Common myeloid progenitor, CD34-positive (primary cell): ENCODE measurements at regions of chr3 and their contacts with region 1.

Region 1: DNA sequence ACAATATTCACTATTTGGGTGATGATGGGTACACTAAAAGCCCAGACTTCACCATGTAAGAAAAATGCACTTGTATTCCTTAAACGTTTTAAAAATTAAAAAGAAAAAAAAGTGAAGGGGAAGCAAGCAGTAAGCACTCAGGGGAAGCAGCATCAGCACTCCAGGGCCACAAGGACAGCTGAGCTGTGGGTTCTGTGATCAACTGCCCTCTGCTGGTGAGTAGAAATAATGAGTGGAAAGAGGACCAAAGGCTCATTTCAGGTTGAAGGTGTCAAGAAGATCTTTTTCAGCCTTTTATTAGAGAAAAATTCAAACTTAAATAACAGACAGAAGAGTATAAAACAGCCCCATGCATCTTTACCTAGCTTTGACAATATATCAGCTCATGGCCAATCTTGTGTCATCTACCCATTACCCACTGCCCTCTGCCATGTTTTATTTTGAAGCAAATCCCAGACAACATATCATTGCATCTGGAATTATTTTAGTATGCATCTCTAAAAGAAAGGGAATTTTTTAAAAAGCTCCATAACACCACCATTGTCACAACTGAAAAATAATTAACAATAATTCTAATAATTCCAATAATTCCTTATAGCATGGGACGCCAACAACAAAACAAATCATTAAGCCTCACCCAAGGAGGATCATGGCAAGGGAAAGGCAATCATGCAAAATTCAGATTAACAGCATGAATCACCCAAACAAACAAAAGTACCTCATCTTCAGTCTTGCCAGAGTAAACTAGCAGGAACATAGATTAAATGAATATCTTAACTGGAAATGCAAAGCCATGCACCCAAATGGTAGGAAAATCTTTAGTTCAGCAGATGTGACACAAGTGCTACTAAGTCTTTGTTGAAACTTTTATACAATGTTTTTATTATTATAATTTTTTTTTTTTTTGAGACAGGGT is 42.5 kb downstream of the TAMM41 start:
- DNase-seq: peak; percentile 59 to 85 (median 84)
- H3K4me3 ChIP-seq: no peak overlapping the region
- H3K27ac ChIP-seq: no peak overlapping the region
- H3K4me1 ChIP-seq: no peaks in the 10 kb centered on the region
- H3K27me3 ChIP-seq: no peaks in the 10 kb centered on the region

Region 2: DNA sequence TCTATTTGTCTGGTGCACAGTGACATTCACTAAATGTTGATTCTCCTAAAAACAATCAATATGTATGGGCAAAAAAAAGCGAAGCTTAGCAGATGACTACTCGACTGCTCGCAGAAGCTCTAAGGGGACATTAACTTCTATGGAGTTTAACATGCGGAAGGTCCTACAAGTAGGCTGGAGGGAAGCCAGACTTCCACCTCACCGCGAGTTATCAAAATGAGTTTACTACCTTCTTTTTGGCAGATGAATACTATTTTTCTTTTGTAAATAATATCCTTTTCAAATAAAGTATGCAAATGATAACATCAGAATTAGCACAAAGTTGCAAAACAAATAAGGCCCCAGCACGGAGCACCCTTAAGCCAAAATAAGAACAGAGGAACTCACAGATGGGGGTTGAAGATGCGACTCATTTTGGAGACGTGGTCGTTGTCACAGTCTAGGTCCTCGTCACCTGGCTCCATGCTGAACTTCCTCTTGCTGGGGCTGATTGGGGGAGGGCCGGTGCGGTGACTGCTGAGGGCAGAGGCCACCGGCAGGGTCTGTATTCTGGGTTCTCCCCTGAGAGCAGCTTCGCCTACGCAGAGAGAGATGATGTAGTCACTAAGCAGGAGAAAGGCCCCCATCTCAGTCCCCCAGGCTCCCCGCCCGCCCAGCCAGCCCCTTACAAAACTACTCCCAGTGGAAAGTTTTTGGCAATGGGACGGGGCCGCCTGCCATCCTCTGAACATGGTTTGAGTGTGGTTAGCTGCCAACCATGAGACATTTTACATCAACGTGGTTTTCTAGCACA is 202.6 kb before region 1 on chr3:
- CTCF ChIA-PET with region 1: no interaction called
- POLR2A ChIA-PET with region 1: no interaction called
- DNase-seq: peak in 2 of 3 donors; percentile 38 to 57
- H3K4me3 ChIP-seq: no peak overlapping the region
- H3K27ac ChIP-seq: peak overlapping the region in 1 of 2 experiments; percentile 34
- H3K4me1 ChIP-seq: peaks cover 0 to 19% (median 6%) of the 10 kb centered on the region in 4 experiments
- H3K27me3 ChIP-seq: no peaks in the 10 kb centered on the region

Region 3: GRCh38 chr3:11651900-11652299 is 152.3 kb before region 1 on chr3:
- CTCF ChIA-PET with region 1: interaction called, 19 read pairs
- POLR2A ChIA-PET with region 1: no interaction called
- DNase-seq: peak in 2 of 3 donors; percentile 68 to 76
- H3K4me3 ChIP-seq: no peak overlapping the region
- H3K27ac ChIP-seq: no peak overlapping the region
- H3K4me1 ChIP-seq: peaks cover 5 to 30% (median 25%) of the 10 kb centered on the region in 4 experiments
- H3K27me3 ChIP-seq: no peaks in the 10 kb centered on the region